GM10248 (cell line): ENCODE measurements at regions of chr6 and their contacts with region 1.

Region 1: GRCh38 chr6:85923013-85923430 is 280.3 kb upstream of the SYNCRIP start:
- DNase-seq: peak; percentile 23
- CTCF ChIP-seq: peak; percentile 63

Region 2: GRCh38 chr6:85911067-85911466 is 12.0 kb before region 1 on chr6:
- CTCF ChIA-PET with region 1: interaction called, 37 read pairs
- POLR2A ChIA-PET with region 1: no interaction called
- DNase-seq: no peak
- CTCF ChIP-seq: no peak

Region 3: DNA sequence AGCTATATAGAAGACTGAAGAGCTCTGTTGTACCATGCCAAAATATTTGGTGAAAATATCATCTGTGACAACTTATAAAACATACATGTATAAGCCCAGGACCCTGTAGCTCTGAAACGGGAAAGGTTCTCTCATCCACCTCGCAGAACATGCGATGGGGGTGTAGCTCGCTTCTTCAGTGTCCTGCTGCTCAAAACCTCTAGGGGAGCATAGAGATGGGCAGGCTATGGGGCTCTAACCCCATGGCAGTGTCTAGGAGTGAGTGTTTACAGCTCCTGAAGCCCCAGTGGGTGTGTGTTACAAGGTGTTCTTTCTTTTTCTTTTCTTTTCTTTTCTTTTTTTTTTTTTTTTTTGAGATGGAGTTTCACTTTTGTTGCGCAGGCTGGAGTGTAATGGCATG is 224.8 kb after region 1 on chr6:
- CTCF ChIA-PET with region 1: no interaction called
- POLR2A ChIA-PET with region 1: no interaction called
- DNase-seq: no peak
- CTCF ChIP-seq: no peak

Region 4: GRCh38 chr6:86856937-86857563 is 934.0 kb after region 1 on chr6:
- CTCF ChIA-PET with region 1: interaction called, 22 read pairs
- POLR2A ChIA-PET with region 1: no interaction called
- DNase-seq: peak; percentile 13
- CTCF ChIP-seq: peak; percentile 73

Region 5: DNA sequence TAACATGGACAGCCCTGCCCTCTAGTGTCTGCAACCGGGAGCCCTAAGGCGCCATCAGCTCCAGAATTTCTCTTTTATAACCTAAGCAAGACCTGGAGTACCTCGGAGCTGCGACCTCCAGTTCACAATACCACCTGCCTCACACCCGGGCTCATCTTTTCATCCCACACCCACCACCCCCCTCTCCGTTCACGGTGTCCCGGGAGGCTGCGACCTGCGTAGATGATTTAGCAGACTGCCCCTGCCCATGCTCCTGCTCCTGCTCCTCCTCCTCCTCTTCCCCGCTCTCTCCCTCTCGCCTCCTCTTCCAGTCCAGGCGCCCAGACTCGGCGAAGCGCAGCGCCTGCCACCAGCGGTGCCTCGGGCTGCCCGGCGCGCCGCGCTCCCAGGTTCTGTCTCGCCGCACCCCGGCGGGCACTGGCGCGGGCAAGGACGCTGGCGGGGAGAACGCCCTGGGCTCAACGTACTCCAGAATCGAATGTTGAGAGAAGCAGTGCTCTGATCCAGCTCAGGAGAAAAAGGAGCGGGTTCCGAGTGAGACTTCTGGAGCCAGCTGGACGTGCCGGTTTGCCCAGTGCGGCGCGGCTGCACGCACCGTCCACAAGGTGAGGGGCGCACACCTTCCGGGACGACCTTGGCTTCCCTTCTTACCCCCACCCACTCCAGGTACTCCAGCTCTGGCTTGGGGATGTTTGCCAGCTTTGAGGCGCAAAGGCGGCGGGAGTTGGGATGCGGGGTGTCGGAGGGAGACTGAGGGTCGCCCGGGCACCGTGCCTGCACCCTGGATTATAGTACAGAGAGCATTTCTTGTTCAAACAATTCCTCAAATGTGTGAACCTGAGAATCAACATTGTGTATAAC is 1014.4 kb after region 1 on chr6 and contains the start of gene HTR1E:
- CTCF ChIA-PET with region 1: interaction called, 16 read pairs
- POLR2A ChIA-PET with region 1: no interaction called
- DNase-seq: peak; percentile 60
- CTCF ChIP-seq: peak; percentile 59